ENCODE measurements at regions of chr13 and their contacts with region 1.

Region 1: DNA sequence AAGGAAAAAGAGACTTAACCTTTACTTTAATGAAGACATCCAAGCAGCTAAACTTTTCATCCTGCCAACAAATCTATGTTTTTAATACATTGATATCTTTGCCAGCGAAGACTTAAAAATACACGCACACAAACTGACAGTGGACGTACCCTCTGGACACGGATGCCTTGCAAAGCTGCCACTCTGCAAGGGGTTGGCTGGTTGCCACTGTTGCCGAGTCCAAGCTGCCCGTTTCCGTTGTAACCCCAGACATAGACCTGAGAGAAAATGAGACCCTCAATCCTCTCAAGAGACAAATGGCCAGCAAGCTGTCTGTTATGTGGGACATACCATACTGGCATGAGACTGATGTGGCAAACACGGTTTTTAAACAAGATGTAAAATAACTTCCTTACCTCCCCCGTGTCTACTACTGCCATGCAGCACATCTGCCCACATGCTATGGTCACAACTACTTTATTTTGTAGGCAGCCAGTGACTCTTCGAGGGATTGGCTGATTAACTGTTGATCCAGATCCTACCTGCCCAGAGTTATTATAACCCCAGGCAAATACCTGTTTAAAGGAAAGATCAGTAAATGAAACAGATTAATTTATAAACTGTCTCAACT is 21.2 kb downstream of the RCBTB2 start:
- DNase-seq: no peak
- H3K4me3 ChIP-seq: no peak overlapping the region
- H3K4me3 Mint-ChIP-seq: no peak overlapping the region
- H3K27ac ChIP-seq: no peak overlapping the region
- H3K27ac Mint-ChIP-seq: no peak overlapping the region
- H3K4me1 ChIP-seq: peaks cover 18 to 20% of the 10 kb centered on the region in 2 donors
- H3K4me1 Mint-ChIP-seq: peaks cover 29% of the 10 kb centered on the region
- H3K27me3 ChIP-seq: no peaks in the 10 kb centered on the region
- H3K27me3 Mint-ChIP-seq: peaks cover 0 to 1% (median 1%) of the 10 kb centered on the region in 3 donors
- CTCF ChIP-seq: no peak

Region 2: DNA sequence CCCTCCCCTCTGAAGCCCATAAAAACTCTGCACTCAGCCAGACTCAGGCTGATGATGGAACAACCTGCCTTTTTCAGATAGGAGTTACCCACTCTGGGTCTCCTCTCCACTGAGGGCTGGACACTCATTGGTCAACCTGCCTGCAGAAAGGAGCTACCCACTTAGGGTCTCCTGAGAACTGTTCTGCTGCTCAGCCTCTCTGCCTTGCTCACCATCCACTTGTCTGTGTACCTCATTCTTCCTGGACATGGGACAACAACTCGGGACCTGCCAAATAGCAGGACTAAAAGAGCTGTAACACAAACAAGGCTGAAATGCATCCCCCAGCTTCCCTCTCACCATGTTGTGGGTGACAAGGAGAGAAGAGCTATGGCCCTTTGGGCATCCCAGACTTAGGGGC is 39.6 kb after region 1 on chr13:
- intact Hi-C with region 1: no loop called
- DNase-seq: no peak
- H3K4me3 ChIP-seq: no peak overlapping the region
- H3K4me3 Mint-ChIP-seq: no peak overlapping the region
- H3K27ac ChIP-seq: no peak overlapping the region
- H3K27ac Mint-ChIP-seq: no peak overlapping the region
- H3K4me1 ChIP-seq: peaks cover 23 to 32% of the 10 kb centered on the region in 2 donors
- H3K4me1 Mint-ChIP-seq: peaks cover 24% of the 10 kb centered on the region
- H3K27me3 ChIP-seq: no peaks in the 10 kb centered on the region
- H3K27me3 Mint-ChIP-seq: no peaks in the 10 kb centered on the region
- CTCF ChIP-seq: no peak

Region 3: GRCh38 chr13:48562296-48563066 is 50.8 kb after region 1 on chr13:
- intact Hi-C with region 1: loop called in 1 of 2 experiments (anchors 10 kb)
- DNase-seq: peak in 2 of 3 donors; percentile 62 to 65
- H3K4me3 ChIP-seq: peak overlapping the region in 1 of 3 experiments; percentile 30
- H3K4me3 Mint-ChIP-seq: no peak overlapping the region
- H3K27ac ChIP-seq: peak overlapping the region; percentile 52 to 96
- H3K27ac Mint-ChIP-seq: peak overlapping the region; percentile 63 to 93 (median 84)
- H3K4me1 ChIP-seq: peaks cover 64 to 86% of the 10 kb centered on the region in 2 donors
- H3K4me1 Mint-ChIP-seq: peaks cover 79% of the 10 kb centered on the region
- H3K27me3 ChIP-seq: no peaks in the 10 kb centered on the region
- H3K27me3 Mint-ChIP-seq: no peaks in the 10 kb centered on the region
- CTCF ChIP-seq: no peak